Left colon (tissue), 2 donors: ENCODE measurements at regions of chr2 and their contacts with region 1.

Region 1: GRCh38 chr2:158006961-158007719 is 94.5 kb upstream of the UPP2 start:
- DNase-seq: no peak
- ATAC-seq: peak; percentile 54

Region 2: GRCh38 chr2:157492189-157492773 is 514.9 kb before region 1 on chr2:
- intact Hi-C with region 1: loop called in 1 of 2 experiments (anchors 10 kb)
- DNase-seq: peak; percentile 57 to 71
- ATAC-seq: peak; percentile 54

Region 3: GRCh38 chr2:157777427-157777826 is 229.7 kb before region 1 on chr2:
- intact Hi-C with region 1: loop called (anchors 5 to 10 kb)
- DNase-seq: peak in 1 of 2 donors; percentile 49
- ATAC-seq: peak; percentile 46